Activated CD4-positive, alpha-beta T cell treated with anti-CD3 and anti-CD28 coated beads for 36 hours (primary cell): ENCODE measurements at regions of chr17 and their contacts with region 1.

Region 1: GRCh38 chr17:75077496-75078283 is 10.1 kb upstream of the SLC16A5 start:
- DNase-seq: peak; percentile 72
- ATAC-seq: peak; percentile 79
- H3K4me3 Mint-ChIP-seq: peak overlapping the region; percentile 41
- H3K27ac Mint-ChIP-seq: peak overlapping the region; percentile 31
- H3K4me1 Mint-ChIP-seq: peaks cover 31% of the 10 kb centered on the region
- H3K27me3 Mint-ChIP-seq: no peaks in the 10 kb centered on the region

Region 2: GRCh38 chr17:74987418-74987908 is 90.2 kb before region 1 on chr17 and contains the start of gene CDR2L:
- CTCF ChIA-PET with region 1: no interaction called
- POLR2A ChIA-PET with region 1: no interaction called
- intact Hi-C with region 1: no loop called
- DNase-seq: peak; percentile 95
- ATAC-seq: peak; percentile 98
- H3K4me3 Mint-ChIP-seq: peak within 1 kb of the TSS; percentile 73
- H3K27ac Mint-ChIP-seq: no peak within 1 kb of the TSS
- H3K4me1 Mint-ChIP-seq: peaks cover 9% of the 10 kb centered on the region
- H3K27me3 Mint-ChIP-seq: peaks cover 10% of the 10 kb centered on the region
- total RNA-seq, gene CDR2L: 0.89 to 0.91 TPM

Region 3: GRCh38 chr17:75096082-75096625 is 18.5 kb after region 1 on chr17:
- CTCF ChIA-PET with region 1: interaction called, 3 read pairs
- POLR2A ChIA-PET with region 1: interaction called, 10 read pairs
- intact Hi-C with region 1: no loop called
- DNase-seq: no peak
- ATAC-seq: no peak
- H3K4me3 Mint-ChIP-seq: no peak overlapping the region
- H3K27ac Mint-ChIP-seq: no peak overlapping the region
- H3K4me1 Mint-ChIP-seq: peaks cover 8% of the 10 kb centered on the region
- H3K27me3 Mint-ChIP-seq: no peaks in the 10 kb centered on the region

Region 4: GRCh38 chr17:75131280-75132017 is 53.8 kb after region 1 on chr17 and contains the start of gene NT5C:
- CTCF ChIA-PET with region 1: no interaction called
- POLR2A ChIA-PET with region 1: no interaction called
- intact Hi-C with region 1: no loop called
- DNase-seq: peak; percentile 84
- ATAC-seq: peak; percentile 82
- H3K4me3 Mint-ChIP-seq: peak within 1 kb of the TSS; percentile 83
- H3K27ac Mint-ChIP-seq: peak within 1 kb of the TSS; percentile 90
- H3K4me1 Mint-ChIP-seq: peaks cover 11% of the 10 kb centered on the region
- H3K27me3 Mint-ChIP-seq: no peaks in the 10 kb centered on the region
- total RNA-seq, gene NT5C: 51.7 to 61.5 TPM